ENCODE measurements at regions of chr18 and their contacts with region 1.

Region 1: GRCh38 chr18:58091099-58091611 is 47.1 kb downstream of the NEDD4L start:
- DNase-seq: peak; percentile 89
- ATAC-seq: peak; percentile 79
- H3K4me3 ChIP-seq: peak overlapping the region; percentile 6; the same call in 1 of the 2 replicates
- H3K27ac ChIP-seq: peak overlapping the region; percentile 90
- H3K4me1 ChIP-seq: peaks cover 70% of the 10 kb centered on the region
- H3K27me3 ChIP-seq: no peaks in the 10 kb centered on the region
- CTCF ChIP-seq: 0 out of 2 replicates have a peak, but pooled peaks have one; percentile 22

Region 2: GRCh38 chr18:58117786-58118403 is 26.7 kb after region 1 on chr18:
- CTCF ChIA-PET with region 1: interaction called, 3 read pairs
- POLR2A ChIA-PET with region 1: no interaction called
- intact Hi-C with region 1: loop called (anchors 2 kb)
- DNase-seq: peak; percentile 93
- ATAC-seq: peak; percentile 84
- H3K4me3 ChIP-seq: no peak overlapping the region
- H3K27ac ChIP-seq: peak overlapping the region; percentile 74
- H3K4me1 ChIP-seq: peaks cover 31% of the 10 kb centered on the region
- H3K27me3 ChIP-seq: no peaks in the 10 kb centered on the region
- CTCF ChIP-seq: no peak

Region 3: GRCh38 chr18:58303363-58303762 is 212.2 kb after region 1 on chr18:
- CTCF ChIA-PET with region 1: no interaction called
- POLR2A ChIA-PET with region 1: no interaction called
- intact Hi-C with region 1: no loop called
- DNase-seq: no peak
- ATAC-seq: no peak
- H3K4me3 ChIP-seq: no peak overlapping the region
- H3K27ac ChIP-seq: no peak overlapping the region
- H3K4me1 ChIP-seq: no peaks in the 10 kb centered on the region
- H3K27me3 ChIP-seq: no peaks in the 10 kb centered on the region
- CTCF ChIP-seq: no peak

Region 4: GRCh38 chr18:58349650-58350049 is 258.5 kb after region 1 on chr18:
- CTCF ChIA-PET with region 1: no interaction called
- POLR2A ChIA-PET with region 1: no interaction called
- intact Hi-C with region 1: no loop called
- DNase-seq: no peak
- ATAC-seq: no peak
- H3K4me3 ChIP-seq: no peak overlapping the region
- H3K27ac ChIP-seq: no peak overlapping the region
- H3K4me1 ChIP-seq: no peaks in the 10 kb centered on the region
- H3K27me3 ChIP-seq: no peaks in the 10 kb centered on the region
- CTCF ChIP-seq: no peak